Heart left ventricle (tissue), 16 donors: ENCODE measurements at regions of chr17 and their contacts with region 1.

Region 1: GRCh38 chr17:55717898-55718735 is 4.5 kb downstream of the TMEM100 start:
- DNase-seq: peak; percentile 63 to 83 (median 68)
- ATAC-seq: peak in 2 of 4 donors; percentile 50 to 52
- H3K4me3 ChIP-seq: no peak overlapping the region
- H3K27ac ChIP-seq: no peak overlapping the region
- H3K4me1 ChIP-seq: peaks cover 0 to 12% (median 4%) of the 10 kb centered on the region in 12 donors
- H3K27me3 ChIP-seq: no peaks in the 10 kb centered on the region
- CTCF ChIP-seq: peak; percentile 70 to 90 (median 82)
- POLR2A ChIP-seq: no peak

Region 2: DNA sequence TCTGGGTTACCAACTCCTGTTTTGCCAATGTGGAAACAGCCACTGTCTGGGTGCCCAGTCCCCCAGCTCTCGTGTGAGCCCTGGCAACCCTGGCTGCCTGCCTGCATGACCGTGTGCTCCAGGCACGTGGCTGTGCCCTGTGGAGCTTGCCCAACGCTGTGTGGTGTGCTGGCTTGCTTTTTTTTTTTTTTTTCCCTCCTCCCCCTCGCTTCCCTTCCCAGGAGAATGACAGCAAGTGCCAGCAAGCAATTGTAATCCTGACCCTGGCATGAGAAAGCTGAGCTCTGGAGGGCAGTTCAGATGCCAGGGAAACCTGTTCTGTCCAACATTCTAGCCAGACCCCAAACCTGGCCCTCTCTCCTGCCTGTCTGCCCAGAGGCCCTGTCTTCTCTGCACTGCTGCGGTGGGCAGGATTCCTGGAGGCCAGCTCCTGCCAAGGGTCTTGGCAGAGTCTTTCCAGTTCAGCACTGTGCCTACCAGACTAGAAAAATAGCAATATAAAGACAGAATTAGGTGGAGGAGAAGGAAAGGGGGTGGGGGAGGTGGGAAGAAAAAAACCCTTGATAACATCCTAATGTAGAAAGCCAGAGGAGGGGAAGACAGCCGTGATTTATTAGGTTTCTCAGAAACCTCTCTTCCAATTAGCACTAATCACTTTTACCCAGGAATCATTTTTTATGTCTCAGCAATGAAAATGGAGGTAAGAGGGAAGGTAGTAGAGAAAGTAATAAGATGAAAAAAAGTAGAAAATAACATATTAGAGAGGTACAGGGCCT is 444.4 kb before region 1 on chr17:
- intact Hi-C with region 1: no loop called
- DNase-seq: peak; percentile 70 to 89 (median 81)
- ATAC-seq: peak; percentile 91 to 93 (median 92)
- H3K4me3 ChIP-seq: peak overlapping the region in 2 of 12 donors; percentile 9 to 22
- H3K27ac ChIP-seq: peak overlapping the region; percentile 57 to 91 (median 83)
- H3K4me1 ChIP-seq: peaks cover 0 to 78% (median 53%) of the 10 kb centered on the region in 12 donors
- H3K27me3 ChIP-seq: peaks cover 0 to 3% (median 0%) of the 10 kb centered on the region in 9 donors
- CTCF ChIP-seq: no peak
- POLR2A ChIP-seq: no peak

Region 3: GRCh38 chr17:55641676-55642081 is 76.4 kb before region 1 on chr17:
- intact Hi-C with region 1: loop called in 1 of 10 experiments (anchors 5 kb)
- DNase-seq: peak; percentile 61 to 74 (median 67)
- ATAC-seq: peak in 3 of 4 donors; percentile 56 to 82 (median 71)
- H3K4me3 ChIP-seq: no peak overlapping the region
- H3K27ac ChIP-seq: no peak overlapping the region
- H3K4me1 ChIP-seq: peaks cover 0 to 12% (median 0%) of the 10 kb centered on the region in 12 donors
- H3K27me3 ChIP-seq: peaks cover 0 to 38% (median 0%) of the 10 kb centered on the region in 9 donors
- CTCF ChIP-seq: peak; percentile 42 to 71 (median 57)
- POLR2A ChIP-seq: no peak